Natural killer cell (primary cell): ENCODE measurements at regions of chr17 and their contacts with region 1.

Region 1: GRCh38 chr17:32444308-32445073 is at the start of gene PSMD11:
- DNase-seq: peak; percentile 94 to 98
- ATAC-seq: peak; percentile 91 to 99 (median 97)
- H3K4me3 ChIP-seq: peak within 1 kb of the TSS; percentile 86
- H3K4me3 Mint-ChIP-seq: peak within 1 kb of the TSS; percentile 86
- H3K27ac ChIP-seq: peak within 1 kb of the TSS; percentile 68
- H3K27ac Mint-ChIP-seq: peak within 1 kb of the TSS; percentile 82 to 95
- H3K4me1 ChIP-seq: peaks cover 12% of the 10 kb centered on the region
- H3K4me1 Mint-ChIP-seq: peaks cover 28 to 33% of the 10 kb centered on the region in 2 donors
- H3K27me3 ChIP-seq: no peaks in the 10 kb centered on the region
- H3K27me3 Mint-ChIP-seq: no peaks in the 10 kb centered on the region
- CTCF ChIP-seq: no peak
- total RNA-seq, gene PSMD11: 83.4 to 108 (median 105) TPM

Region 2: GRCh38 chr17:32319548-32319905 is 125.0 kb before region 1 on chr17:
- intact Hi-C with region 1: no loop called
- DNase-seq: peak; percentile 76 to 84
- ATAC-seq: peak; percentile 90 to 97 (median 95)
- H3K4me3 ChIP-seq: peak overlapping the region; percentile 18
- H3K4me3 Mint-ChIP-seq: peak overlapping the region; percentile 78
- H3K27ac ChIP-seq: no peak overlapping the region
- H3K27ac Mint-ChIP-seq: peak overlapping the region in 1 of 2 donors; percentile 54
- H3K4me1 ChIP-seq: peaks cover 23% of the 10 kb centered on the region
- H3K4me1 Mint-ChIP-seq: peaks cover 0 to 11% of the 10 kb centered on the region in 2 donors
- H3K27me3 ChIP-seq: peaks cover 3% of the 10 kb centered on the region
- H3K27me3 Mint-ChIP-seq: peaks cover 0 to 3% of the 10 kb centered on the region in 2 donors
- CTCF ChIP-seq: peak; percentile 93

Region 3: DNA sequence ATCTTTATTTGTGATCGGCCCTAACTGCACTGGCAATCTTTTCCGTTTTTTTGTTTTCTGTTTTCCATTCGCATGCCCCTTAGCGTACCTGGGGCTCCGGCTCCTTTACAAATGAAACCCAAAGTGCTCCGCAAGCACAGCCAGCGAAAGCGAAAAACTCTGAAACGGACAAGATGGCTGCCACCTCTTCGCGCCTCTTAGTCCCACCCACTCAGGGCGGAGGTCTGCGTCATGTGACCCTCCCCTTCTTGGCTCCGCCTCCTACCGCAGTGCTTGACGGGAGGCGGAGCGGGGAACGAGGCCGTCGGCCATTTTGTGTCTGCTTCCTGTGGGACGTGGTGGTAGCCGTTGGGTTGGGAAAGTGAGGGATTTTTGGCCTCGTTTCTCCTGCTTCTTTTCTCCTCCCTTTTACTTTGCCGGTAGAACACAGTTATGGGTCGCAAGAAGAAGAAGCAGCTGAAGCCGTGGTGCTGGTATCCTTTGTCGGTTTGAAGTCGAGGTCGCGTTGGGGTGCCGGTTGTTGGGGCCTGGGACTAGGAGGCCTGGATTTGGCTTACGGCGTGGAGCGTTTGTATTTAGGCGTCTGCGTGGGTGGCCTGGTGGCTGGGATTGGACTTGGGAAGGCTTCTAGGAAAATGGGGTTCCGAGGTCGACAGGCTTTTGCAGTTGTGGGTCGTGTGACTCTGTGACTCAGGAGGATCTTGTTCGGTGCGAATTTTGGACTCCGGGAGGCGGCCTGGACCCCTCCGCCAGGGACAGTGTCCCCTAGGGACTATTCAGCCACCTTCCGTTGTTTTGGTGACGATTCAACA is 94.4 kb before region 1 on chr17 and contains the start of gene ZNF207:
- intact Hi-C with region 1: loop called (anchors 1 kb)
- DNase-seq: peak; percentile 93 to 99
- ATAC-seq: peak; percentile 94 to 100 (median 98)
- H3K4me3 ChIP-seq: peak within 1 kb of the TSS; percentile 94
- H3K4me3 Mint-ChIP-seq: peak within 1 kb of the TSS; percentile 100
- H3K27ac ChIP-seq: peak within 1 kb of the TSS; percentile 97
- H3K27ac Mint-ChIP-seq: peak within 1 kb of the TSS; percentile 100
- H3K4me1 ChIP-seq: peaks cover 35% of the 10 kb centered on the region
- H3K4me1 Mint-ChIP-seq: peaks cover 32 to 41% of the 10 kb centered on the region in 2 donors
- H3K27me3 ChIP-seq: no peaks in the 10 kb centered on the region
- H3K27me3 Mint-ChIP-seq: no peaks in the 10 kb centered on the region
- CTCF ChIP-seq: no peak
- total RNA-seq, gene ZNF207: 378 to 444 (median 428) TPM

Region 4: DNA sequence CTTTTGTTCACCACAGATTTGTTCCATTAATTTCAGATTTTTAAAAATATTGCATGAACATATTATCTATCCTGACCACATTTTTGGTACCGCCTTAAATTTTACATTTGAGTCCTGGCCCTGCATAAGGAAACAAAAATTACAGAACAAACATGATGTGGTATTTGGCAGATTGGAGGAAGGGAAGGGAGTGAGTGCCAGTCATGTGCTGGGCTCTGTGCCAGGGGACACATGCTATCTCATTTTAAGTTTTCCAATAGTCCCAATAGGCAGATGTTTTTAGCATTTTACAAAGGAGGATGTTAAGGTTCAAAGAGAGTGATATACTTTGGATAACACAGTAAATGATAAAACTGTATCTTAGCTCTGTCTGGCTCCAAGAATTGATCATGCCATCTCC is 227.4 kb after region 1 on chr17:
- intact Hi-C with region 1: no loop called
- DNase-seq: no peak
- ATAC-seq: no peak
- H3K4me3 ChIP-seq: no peak overlapping the region
- H3K4me3 Mint-ChIP-seq: no peak overlapping the region
- H3K27ac ChIP-seq: no peak overlapping the region
- H3K27ac Mint-ChIP-seq: no peak overlapping the region
- H3K4me1 ChIP-seq: no peaks in the 10 kb centered on the region
- H3K4me1 Mint-ChIP-seq: peaks cover 5 to 9% of the 10 kb centered on the region in 2 donors
- H3K27me3 ChIP-seq: no peaks in the 10 kb centered on the region
- H3K27me3 Mint-ChIP-seq: peaks cover 2 to 4% of the 10 kb centered on the region in 2 donors
- CTCF ChIP-seq: no peak